OCI-LY7 (cell line): ENCODE measurements at regions of chr4 and their contacts with region 1.

Region 1: DNA sequence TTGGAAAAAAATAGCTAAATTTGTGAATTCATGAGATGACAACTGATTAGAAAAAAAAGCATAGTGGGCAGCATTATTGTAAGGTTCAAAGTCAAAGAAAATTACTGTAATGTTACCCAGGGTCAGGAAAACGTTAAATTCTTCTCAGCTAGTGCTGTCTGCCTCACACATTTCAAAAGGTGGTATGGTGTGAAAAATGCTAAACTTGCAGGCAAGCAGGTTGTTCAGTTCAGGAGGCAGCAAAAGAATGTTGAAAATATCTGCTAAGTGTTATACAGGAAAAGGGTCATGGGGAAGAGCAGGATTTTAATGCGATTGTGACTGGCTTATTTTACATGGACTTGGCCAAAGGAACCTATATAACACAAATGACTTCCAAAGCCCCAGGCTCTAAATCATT is 232.5 kb upstream of the NDST3 start:
- DNase-seq: no peak
- H3K4me3 ChIP-seq: no peak overlapping the region
- H3K27ac ChIP-seq: no peak overlapping the region
- H3K4me1 ChIP-seq: no peaks in the 10 kb centered on the region
- CTCF ChIP-seq: no peak

Region 2: DNA sequence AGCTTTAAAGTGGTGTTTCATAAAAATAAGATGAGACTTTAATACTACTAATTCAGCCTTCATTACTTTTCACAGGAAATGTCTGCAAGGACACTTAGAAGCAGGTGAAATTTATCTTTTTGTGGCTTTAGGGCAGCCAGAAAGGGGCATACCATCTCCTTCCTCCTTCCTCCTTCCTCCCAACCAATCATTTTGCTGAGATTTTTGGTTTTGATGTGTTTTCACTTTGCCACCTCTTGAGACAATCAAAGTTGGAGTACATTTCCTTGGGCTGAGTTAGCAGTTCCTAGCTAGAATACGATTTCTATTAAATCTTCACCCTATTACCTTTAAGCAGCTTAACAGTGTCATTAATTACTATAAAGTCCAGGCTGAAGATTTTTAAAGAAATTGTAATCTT is 227.5 kb after region 1 on chr4:
- CTCF ChIA-PET with region 1: no interaction called
- POLR2A ChIA-PET with region 1: no interaction called
- intact Hi-C with region 1: loop called (anchors 10 kb)
- DNase-seq: no peak
- H3K4me3 ChIP-seq: no peak overlapping the region
- H3K27ac ChIP-seq: no peak overlapping the region
- H3K4me1 ChIP-seq: no peaks in the 10 kb centered on the region
- CTCF ChIP-seq: no peak